A673 (cell line): ENCODE measurements at regions of chr2 and their contacts with region 1.

Region 1: GRCh38 chr2:182915369-182916326 is 49.2 kb upstream of the FRZB start:
- DNase-seq: peak; percentile 95
- H3K4me3 ChIP-seq: no peak overlapping the region
- H3K27ac ChIP-seq: peak overlapping the region; percentile 93
- H3K4me1 ChIP-seq: peaks cover 77% of the 10 kb centered on the region
- H3K27me3 ChIP-seq: no peaks in the 10 kb centered on the region
- CTCF ChIP-seq: no peak

Region 2: GRCh38 chr2:182593394-182593975 is 322.2 kb before region 1 on chr2:
- CTCF ChIA-PET with region 1: no interaction called
- POLR2A ChIA-PET with region 1: no interaction called
- intact Hi-C with region 1: loop called (anchors 5 kb)
- DNase-seq: peak; percentile 96
- H3K4me3 ChIP-seq: no peak overlapping the region
- H3K27ac ChIP-seq: no peak overlapping the region
- H3K4me1 ChIP-seq: peaks cover 49% of the 10 kb centered on the region
- H3K27me3 ChIP-seq: no peaks in the 10 kb centered on the region
- CTCF ChIP-seq: no peak

Region 3: DNA sequence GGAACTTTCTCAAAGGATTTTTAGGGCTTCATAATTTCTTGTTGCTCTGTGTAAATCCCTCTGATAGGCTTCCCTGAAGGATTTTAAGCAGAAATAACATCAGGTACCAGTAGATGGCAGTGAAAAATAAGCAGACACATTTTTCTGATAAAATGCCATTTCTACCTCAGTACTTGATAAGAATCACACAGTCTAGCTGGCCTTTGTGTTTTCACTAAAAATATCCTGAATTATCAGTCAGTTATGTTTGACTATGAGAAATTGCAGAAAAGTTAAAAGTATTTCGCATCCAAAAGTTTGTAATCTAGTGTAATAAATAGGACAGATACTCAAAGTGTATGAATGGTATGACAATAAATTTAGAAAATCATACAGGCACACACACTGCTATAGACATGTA is 130.9 kb before region 1 on chr2:
- CTCF ChIA-PET with region 1: interaction called, 4 read pairs
- POLR2A ChIA-PET with region 1: no interaction called
- intact Hi-C with region 1: loop called (anchors 2 kb)
- DNase-seq: peak; percentile 84
- H3K4me3 ChIP-seq: no peak overlapping the region
- H3K27ac ChIP-seq: no peak overlapping the region
- H3K4me1 ChIP-seq: peaks cover 13% of the 10 kb centered on the region
- H3K27me3 ChIP-seq: no peaks in the 10 kb centered on the region
- CTCF ChIP-seq: peak; percentile 75

Region 4: GRCh38 chr2:182951948-182952663 is 36.5 kb after region 1 on chr2:
- CTCF ChIA-PET with region 1: interaction called, 3 read pairs
- POLR2A ChIA-PET with region 1: no interaction called
- intact Hi-C with region 1: loop called (anchors 2 kb)
- DNase-seq: no peak
- H3K4me3 ChIP-seq: no peak overlapping the region
- H3K27ac ChIP-seq: peak overlapping the region; percentile 43
- H3K4me1 ChIP-seq: peaks cover 55% of the 10 kb centered on the region
- H3K27me3 ChIP-seq: no peaks in the 10 kb centered on the region
- CTCF ChIP-seq: no peak

Region 5: DNA sequence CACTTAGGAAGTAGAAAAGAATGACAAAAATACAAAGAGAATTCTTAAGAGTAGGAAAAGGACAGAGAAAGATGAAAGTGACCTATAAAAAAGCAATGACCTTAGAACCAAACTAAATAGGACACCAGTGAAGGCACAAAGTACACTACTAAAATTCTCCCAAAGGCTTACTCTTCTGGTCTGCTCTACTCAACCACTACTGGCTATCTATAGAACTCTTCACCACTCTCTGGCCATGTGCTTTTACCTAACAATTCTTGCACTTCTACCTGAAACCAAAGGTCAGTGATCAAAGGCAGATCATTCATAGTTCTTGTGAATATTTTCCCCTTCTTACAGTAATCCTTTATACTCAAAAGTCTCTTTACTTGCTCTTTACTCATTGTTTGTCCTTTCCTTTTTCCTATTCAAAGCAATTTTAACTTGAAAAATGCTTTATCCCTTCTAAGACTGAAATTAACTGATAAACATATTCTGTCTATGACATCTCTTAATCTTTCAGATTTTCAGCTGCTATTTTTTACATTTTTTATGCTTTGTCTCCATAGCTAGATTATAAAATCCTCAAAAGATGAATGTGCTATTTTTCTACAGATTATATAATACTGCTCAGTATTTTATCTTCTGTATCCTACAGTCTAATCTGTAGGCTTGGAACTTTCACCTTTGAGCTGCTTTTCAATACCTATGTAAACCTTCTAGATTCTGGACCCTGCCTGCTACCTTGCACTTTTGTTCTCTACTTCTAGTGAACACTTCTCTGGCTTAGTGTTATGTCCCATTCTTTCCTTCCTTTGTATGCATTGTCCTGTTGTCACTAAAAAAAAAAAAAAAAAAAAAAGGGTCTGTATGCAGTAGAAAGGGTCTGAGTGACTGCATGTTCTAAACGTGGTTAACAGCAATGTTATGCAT is 58.0 kb after region 1 on chr2:
- CTCF ChIA-PET with region 1: no interaction called
- POLR2A ChIA-PET with region 1: no interaction called
- intact Hi-C with region 1: loop called (anchors 2 kb)
- DNase-seq: no peak
- H3K4me3 ChIP-seq: no peak overlapping the region
- H3K27ac ChIP-seq: no peak overlapping the region
- H3K4me1 ChIP-seq: peaks cover 14% of the 10 kb centered on the region
- H3K27me3 ChIP-seq: no peaks in the 10 kb centered on the region
- CTCF ChIP-seq: no peak

Region 6: GRCh38 chr2:183010112-183010511 is 94.5 kb after region 1 on chr2:
- CTCF ChIA-PET with region 1: no interaction called
- POLR2A ChIA-PET with region 1: no interaction called
- intact Hi-C with region 1: loop called (anchors 1 kb)
- DNase-seq: peak; percentile 90
- H3K4me3 ChIP-seq: no peak overlapping the region
- H3K27ac ChIP-seq: peak overlapping the region; percentile 87
- H3K4me1 ChIP-seq: peaks cover 94% of the 10 kb centered on the region
- H3K27me3 ChIP-seq: no peaks in the 10 kb centered on the region
- CTCF ChIP-seq: no peak